Left colon (tissue), 2 donors: ENCODE measurements at regions of chr17 and their contacts with region 1.

Region 1: DNA sequence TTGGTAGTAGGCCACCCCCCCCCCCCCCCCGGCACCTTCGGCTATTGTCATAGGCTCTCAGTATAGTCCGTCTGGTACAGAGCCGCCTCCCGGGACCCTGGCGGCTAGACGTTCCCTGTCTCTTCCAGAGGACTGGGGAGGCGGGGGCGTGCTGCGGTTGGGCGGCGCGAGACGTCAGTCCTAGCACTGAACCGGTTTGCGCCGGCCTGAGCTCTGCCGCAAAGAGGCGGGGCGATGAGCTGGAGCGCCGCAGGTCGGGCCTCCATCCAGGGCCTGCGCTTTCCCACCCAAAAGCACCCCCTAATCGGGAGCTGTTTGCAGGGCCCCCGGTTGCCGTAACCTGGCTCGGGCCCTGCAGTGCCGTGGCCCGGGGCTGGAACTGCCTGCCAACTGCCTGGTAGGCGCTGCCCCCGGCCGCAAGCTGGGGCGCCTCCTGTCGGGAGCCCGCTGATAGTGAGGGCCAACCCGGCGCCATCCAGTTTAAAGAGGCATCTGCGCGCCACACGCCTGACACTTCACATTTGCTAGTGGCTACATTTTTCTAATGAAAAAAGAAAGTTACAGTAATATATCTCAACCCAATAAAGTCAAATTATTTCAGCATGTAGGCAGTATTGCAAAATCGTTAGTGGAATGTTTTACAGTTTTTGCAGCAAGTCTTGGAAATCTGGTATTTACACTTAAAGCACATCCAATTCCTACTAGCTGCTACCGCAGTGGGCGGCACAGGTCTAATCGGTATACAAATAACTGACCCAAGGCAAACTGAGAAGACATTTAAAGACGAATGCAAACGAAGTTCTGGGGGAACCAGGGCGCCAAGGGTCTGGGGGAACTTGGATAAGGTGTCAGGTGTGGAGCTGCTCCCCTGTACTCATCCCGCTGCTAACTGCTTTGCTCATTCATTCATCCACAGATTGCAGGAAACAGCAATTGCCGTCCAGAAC is 748 bp upstream of the USP22 start:
- DNase-seq: peak; percentile 97 to 99
- ATAC-seq: peak; percentile 83

Region 2: GRCh38 chr17:20922128-20922670 is 121.4 kb before region 1 on chr17:
- intact Hi-C with region 1: no loop called
- DNase-seq: no peak
- ATAC-seq: no peak

Region 3: DNA sequence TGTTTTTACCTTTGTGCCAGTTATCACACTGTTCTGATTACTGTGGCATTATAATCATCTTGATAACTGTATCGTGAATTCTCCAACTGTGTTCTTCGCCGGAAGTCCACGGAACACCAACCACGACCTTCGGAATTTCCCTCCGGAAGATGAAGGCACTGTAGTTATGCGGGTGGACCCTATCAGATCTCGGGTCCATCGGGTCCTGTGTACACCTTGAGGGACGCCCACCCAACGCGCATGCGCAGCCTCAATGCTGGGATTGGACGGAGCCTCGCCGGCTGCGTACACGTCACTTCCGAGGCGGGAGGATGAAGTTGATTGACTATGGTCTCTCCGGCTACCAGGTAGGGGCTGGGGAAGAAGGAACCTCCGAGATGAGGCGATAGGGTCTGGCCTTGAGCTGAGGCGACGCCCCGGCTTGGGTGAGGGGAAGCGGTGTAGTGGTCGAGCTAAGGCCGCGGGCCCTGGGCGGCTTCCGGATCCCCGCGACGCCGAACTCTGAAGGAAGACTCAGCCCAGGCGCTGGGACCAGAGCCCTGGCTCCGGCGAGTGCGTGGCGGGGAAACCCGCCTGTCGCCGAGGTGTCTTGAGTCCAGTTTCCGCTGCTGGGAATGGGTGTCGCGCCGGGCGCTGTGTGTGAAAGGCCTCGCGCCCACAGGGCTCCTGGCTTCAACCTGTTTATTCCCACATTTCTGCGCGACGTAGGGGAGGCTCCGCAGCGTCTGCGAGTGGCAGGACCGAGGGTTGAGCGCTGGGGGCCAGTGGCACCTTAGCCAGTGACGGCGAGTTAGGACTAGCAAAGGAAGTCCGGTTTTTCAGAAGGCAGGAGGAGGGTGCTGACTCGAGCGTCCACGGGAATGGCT is 83.3 kb after region 1 on chr17 and contains the start of gene DHRS7B:
- intact Hi-C with region 1: no loop called
- DNase-seq: peak; percentile 98 to 99
- ATAC-seq: peak; percentile 96
- total RNA-seq, gene DHRS7B: 32.1 to 33.5 TPM

Region 4: GRCh38 chr17:21214015-21214776 is 170.6 kb after region 1 on chr17 and contains the start of gene TMEM11:
- intact Hi-C with region 1: loop called in 1 of 2 experiments (anchors 10 kb)
- DNase-seq: peak; percentile 95 to 97
- ATAC-seq: peak; percentile 81
- total RNA-seq, gene TMEM11: 28.5 to 30.7 TPM

Region 5: DNA sequence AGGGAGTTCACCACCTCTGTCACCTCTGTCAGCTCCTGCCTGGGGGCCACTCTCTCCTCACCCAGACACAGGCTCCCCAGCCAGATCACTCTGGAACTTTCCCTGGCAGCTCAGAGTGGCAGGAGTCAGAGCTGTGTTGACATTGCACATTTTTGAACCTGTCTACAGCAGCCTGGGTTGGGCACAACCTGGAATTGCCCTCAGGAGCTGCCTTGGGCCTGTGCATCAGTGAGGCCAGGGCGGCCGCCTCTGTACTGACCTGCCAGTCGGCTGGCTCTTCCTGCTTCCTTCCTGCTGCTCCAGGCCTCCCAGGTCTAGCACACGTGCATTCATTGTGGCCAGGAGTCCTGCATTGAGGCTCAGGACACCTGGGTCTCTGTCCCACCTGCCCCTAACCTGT is 184.5 kb after region 1 on chr17:
- intact Hi-C with region 1: no loop called
- DNase-seq: no peak
- ATAC-seq: no peak